Activated CD4-positive, alpha-beta memory T cell treated with anti-CD3 and anti-CD28 coated beads for 36 hours (primary cell): ENCODE measurements at regions of chr12 and their contacts with region 1.

Region 1: GRCh38 chr12:87848248-87848868 is 180.8 kb downstream of the C12orf50 start:
- DNase-seq: no peak
- H3K4me3 Mint-ChIP-seq: no peak overlapping the region
- H3K27ac Mint-ChIP-seq: no peak overlapping the region
- H3K4me1 Mint-ChIP-seq: no peaks in the 10 kb centered on the region
- H3K27me3 Mint-ChIP-seq: peaks cover 6% of the 10 kb centered on the region

Region 2: DNA sequence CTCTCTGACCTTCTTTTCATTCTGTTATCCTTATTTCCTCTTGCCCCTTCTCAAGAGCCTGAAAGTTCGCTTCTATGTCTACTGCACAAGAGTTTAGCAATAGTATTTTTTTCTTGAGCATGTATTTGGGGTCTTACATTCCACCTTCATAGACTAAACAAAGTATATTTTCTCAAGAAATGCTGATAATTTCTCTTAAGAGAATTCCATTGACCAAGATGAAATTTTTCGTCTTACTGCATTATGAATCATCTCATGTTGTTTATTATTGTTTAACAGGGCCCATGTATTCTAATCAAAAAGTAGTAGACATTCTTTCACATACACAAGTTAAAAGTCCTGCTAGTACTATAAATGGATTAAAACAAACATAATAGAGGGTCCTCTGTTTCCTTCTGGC is 38.4 kb before region 1 on chr12:
- CTCF ChIA-PET with region 1: no interaction called
- POLR2A ChIA-PET with region 1: no interaction called
- intact Hi-C with region 1: no loop called
- DNase-seq: no peak
- H3K4me3 Mint-ChIP-seq: no peak overlapping the region
- H3K27ac Mint-ChIP-seq: no peak overlapping the region
- H3K4me1 Mint-ChIP-seq: no peaks in the 10 kb centered on the region
- H3K27me3 Mint-ChIP-seq: no peaks in the 10 kb centered on the region

Region 3: DNA sequence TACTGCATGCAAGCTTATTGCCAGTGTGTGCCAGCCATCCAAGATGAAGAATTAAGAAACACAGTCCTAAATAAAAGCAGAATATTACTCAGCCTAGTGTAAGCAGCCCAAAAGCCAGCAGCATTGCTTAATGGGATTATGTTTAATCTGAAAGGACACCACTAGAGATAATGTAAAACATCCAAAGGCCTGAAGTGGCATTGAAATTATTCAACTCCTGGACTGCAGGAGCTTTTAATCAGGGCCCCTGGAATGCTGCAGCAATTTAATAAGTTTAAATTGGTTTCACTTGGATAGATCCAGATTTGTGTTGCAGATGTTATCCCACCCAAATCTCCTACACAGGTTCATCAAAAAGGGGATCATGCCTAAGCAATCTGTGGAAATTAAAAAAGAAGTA is 12.2 kb before region 1 on chr12:
- CTCF ChIA-PET with region 1: interaction called, 15 read pairs
- POLR2A ChIA-PET with region 1: no interaction called
- intact Hi-C with region 1: no loop called
- DNase-seq: no peak
- H3K4me3 Mint-ChIP-seq: no peak overlapping the region
- H3K27ac Mint-ChIP-seq: no peak overlapping the region
- H3K4me1 Mint-ChIP-seq: no peaks in the 10 kb centered on the region
- H3K27me3 Mint-ChIP-seq: no peaks in the 10 kb centered on the region

Region 4: GRCh38 chr12:87995581-87996178 is 147.3 kb after region 1 on chr12:
- CTCF ChIA-PET with region 1: no interaction called
- POLR2A ChIA-PET with region 1: no interaction called
- intact Hi-C with region 1: loop called (anchors 5 kb)
- DNase-seq: peak; percentile 61
- H3K4me3 Mint-ChIP-seq: no peak overlapping the region
- H3K27ac Mint-ChIP-seq: no peak overlapping the region
- H3K4me1 Mint-ChIP-seq: peaks cover 2% of the 10 kb centered on the region
- H3K27me3 Mint-ChIP-seq: no peaks in the 10 kb centered on the region

Region 5: DNA sequence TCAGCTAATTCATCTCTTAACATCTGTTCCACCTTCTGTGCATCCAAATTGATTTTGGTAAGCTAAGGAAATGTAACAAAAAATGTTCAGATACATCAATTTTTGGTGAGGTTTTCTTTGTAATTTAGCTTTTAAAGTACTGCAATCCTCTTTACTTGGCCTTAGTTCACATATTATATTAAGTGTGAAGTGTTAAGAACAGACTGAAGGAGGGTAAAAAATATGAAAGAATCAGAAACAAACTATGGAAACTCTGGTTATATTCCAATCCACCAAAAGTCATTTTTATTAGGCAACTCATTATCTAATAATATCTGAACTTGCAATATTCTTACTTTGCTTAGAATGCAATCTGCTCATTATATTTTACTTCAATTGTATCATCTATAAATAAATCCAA is 244.4 kb after region 1 on chr12:
- CTCF ChIA-PET with region 1: no interaction called
- POLR2A ChIA-PET with region 1: no interaction called
- intact Hi-C with region 1: no loop called
- DNase-seq: no peak
- H3K4me3 Mint-ChIP-seq: no peak overlapping the region
- H3K27ac Mint-ChIP-seq: no peak overlapping the region
- H3K4me1 Mint-ChIP-seq: no peaks in the 10 kb centered on the region
- H3K27me3 Mint-ChIP-seq: no peaks in the 10 kb centered on the region